Gastrocnemius medialis (tissue), 4 donors: ENCODE measurements at regions of chr13 and their contacts with region 1.

Region 1: DNA sequence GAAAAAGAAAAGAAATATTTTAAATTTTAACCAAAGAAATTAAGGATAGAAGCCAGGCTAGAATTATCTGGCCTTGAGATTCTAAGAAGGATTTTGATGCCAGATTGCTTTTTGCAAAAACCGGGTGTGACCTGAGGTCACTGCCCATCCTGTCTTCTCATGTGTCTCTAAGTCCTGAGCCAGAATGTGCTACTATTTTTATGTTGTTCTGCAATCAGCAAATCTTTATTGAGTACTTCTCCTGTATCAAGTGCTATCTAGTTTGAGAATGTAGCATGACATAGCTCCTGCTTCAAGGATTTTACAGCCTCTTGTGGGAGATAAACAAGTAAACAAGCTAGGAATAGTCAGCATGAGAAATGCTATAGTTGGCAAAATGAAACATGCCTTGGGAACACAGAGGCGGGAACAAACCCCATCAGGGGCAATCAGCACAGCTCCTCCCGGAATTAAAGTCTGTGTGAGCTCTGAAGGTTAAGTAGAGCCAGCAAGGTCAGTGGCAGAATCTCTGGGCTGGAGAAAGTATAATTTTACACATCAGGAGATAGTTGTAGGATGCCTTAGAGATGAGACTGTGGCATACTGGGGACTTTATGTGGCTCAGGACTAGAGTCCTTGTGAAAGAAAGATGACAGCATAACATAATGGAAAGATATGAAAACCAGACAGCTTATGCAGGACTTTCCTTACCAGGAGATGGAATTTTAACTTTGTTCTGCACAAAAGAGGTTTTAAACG is 899.5 kb upstream of the SLC10A2 start:
- DNase-seq: peak; percentile 15 to 19
- ATAC-seq: peak; percentile 70 to 80
- H3K4me3 ChIP-seq: peak overlapping the region in 1 of 4 donors; percentile 20
- H3K27ac ChIP-seq: peak overlapping the region; percentile 71 to 82 (median 74)
- H3K4me1 ChIP-seq: peaks cover 33 to 35% of the 10 kb centered on the region in 2 donors
- H3K27me3 ChIP-seq: no peaks in the 10 kb centered on the region
- CTCF ChIP-seq: no peak
- POLR2A ChIP-seq: no peak

Region 2: GRCh38 chr13:103976366-103976765 is 10.7 kb after region 1 on chr13:
- in situ Hi-C with region 1: no loop called
- intact Hi-C with region 1: no loop called
- DNase-seq: no peak
- ATAC-seq: no peak
- H3K4me3 ChIP-seq: no peak overlapping the region
- H3K27ac ChIP-seq: no peak overlapping the region
- H3K4me1 ChIP-seq: peaks cover 4 to 5% of the 10 kb centered on the region in 2 donors
- H3K27me3 ChIP-seq: no peaks in the 10 kb centered on the region
- CTCF ChIP-seq: no peak
- POLR2A ChIP-seq: no peak

Region 3: DNA sequence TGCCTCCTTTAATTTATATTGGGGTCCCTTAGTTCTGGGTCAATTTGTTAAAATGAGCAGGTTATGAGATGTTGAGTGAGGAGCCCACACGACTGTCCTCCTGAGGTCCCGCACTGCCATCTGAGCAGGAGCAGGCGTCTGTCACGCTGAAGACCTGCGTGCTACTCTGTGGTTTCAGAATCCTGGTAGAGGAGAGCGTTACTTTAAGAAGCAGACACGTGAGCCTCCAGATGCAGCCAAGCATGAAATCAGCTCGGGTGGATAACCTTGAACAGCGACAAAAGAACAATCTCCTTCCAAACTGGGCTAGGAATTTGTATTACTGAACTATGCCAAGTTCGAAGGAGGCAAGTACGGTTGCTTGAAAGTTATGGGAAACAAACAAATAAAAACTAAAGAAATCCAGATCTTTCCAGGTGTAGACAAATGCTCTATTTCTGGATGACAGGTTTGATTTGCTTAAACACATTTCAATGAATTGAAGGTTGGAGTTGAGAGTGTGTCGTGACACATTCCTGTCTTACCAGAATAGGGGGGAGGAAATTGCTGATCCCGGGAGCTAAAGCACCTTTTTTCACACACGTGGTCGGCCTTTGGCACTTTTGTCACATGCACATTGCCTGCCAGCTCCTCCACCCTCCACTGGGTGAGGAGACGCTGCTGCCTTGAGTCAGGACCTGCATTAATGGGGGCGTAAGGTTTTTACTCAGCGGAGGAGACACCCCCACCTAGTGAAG is 46.0 kb after region 1 on chr13:
- in situ Hi-C with region 1: no loop called
- intact Hi-C with region 1: loop called (anchors 5 kb)
- DNase-seq: peak; percentile 61 to 63
- ATAC-seq: peak; percentile 90 to 93
- H3K4me3 ChIP-seq: peak overlapping the region; percentile 35 to 48 (median 43)
- H3K27ac ChIP-seq: peak overlapping the region; percentile 54 to 69 (median 60)
- H3K4me1 ChIP-seq: peaks cover 0 to 6% of the 10 kb centered on the region in 2 donors
- H3K27me3 ChIP-seq: no peaks in the 10 kb centered on the region
- CTCF ChIP-seq: no peak
- POLR2A ChIP-seq: peak in 1 of 2 donors; percentile 27